HEK293 (cell line): ENCODE measurements at regions of chr2 and their contacts with region 1.

Region 1: GRCh38 chr2:191501561-191502168 is 176.3 kb upstream of the NABP1 start:
- H3K4me3 ChIP-seq: no peak overlapping the region
- H3K27ac ChIP-seq: no peak overlapping the region
- H3K4me1 ChIP-seq: no peaks in the 10 kb centered on the region
- CTCF ChIP-seq: peak; percentile 26; the same call in 1 of the 2 replicates

Region 2: DNA sequence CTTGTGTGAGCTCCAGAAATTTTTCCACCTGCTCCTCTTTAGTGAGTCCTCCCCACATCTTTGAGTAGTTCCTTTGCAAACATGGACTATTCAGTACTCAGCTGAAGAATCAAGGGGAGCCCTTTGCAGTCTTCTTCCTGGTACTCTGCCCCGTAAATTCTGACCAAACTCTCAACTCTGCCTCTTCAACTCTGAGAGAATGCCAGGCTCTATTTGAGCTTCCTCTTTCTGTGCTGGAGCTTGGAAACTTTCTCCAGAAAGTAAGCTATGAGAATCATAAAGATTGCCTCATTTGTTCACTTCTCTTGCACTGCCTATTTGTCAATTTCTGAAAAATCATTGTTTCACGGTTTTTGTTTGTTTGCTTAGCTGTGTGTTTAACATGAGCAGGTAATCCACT is 343.5 kb before region 1 on chr2:
- CTCF ChIA-PET with region 1: interaction called, 39 read pairs
- POLR2A ChIA-PET with region 1: no interaction called
- H3K4me3 ChIP-seq: no peak overlapping the region
- H3K27ac ChIP-seq: no peak overlapping the region
- H3K4me1 ChIP-seq: peaks cover 2% of the 10 kb centered on the region; the same call in 1 of the 2 replicates
- CTCF ChIP-seq: no peak

Region 3: GRCh38 chr2:191171708-191172355 is 329.8 kb before region 1 on chr2:
- CTCF ChIA-PET with region 1: interaction called, 39 read pairs
- POLR2A ChIA-PET with region 1: no interaction called
- H3K4me3 ChIP-seq: no peak overlapping the region
- H3K27ac ChIP-seq: no peak overlapping the region
- H3K4me1 ChIP-seq: no peaks in the 10 kb centered on the region
- CTCF ChIP-seq: no peak

Region 4: GRCh38 chr2:191329825-191330224 is 171.8 kb before region 1 on chr2:
- CTCF ChIA-PET with region 1: no interaction called
- POLR2A ChIA-PET with region 1: no interaction called
- H3K4me3 ChIP-seq: no peak overlapping the region
- H3K27ac ChIP-seq: no peak overlapping the region
- H3K4me1 ChIP-seq: no peaks in the 10 kb centered on the region
- CTCF ChIP-seq: no peak

Region 5: DNA sequence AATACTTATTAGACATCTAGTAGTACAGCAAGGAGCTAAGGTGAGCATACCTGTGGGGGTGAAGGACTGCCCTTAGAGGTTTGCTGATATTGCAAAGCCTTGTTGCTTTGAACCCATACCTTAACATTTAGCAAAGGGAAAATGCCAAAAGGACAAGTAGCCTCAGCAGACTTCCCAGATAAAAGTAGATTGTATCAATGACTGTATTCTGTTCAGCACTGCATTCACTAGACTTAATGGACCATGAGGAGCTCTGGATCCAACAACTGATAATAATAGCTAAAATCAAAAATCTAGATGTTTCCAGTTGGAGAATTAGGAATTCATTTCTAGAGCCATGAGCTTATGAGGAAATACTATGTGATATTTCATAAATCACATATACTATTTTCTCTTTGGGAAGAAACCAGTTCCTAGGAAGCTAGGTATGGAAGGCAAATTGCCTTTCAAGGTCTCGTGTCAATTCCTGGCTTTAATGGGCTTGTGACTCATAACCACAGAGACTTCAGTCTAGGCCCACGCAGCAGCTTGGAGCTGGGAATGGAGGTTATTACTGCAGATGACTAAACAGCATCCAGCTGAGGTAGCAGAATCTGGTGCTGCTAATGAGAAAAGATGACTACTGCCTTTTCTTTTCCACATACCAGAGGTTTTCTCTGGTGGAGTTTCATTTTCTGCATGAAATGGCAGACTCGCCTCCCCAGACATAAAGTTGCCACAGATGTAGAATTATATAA is 14.9 kb before region 1 on chr2:
- CTCF ChIA-PET with region 1: interaction called, 11 read pairs
- POLR2A ChIA-PET with region 1: no interaction called
- H3K4me3 ChIP-seq: no peak overlapping the region
- H3K27ac ChIP-seq: no peak overlapping the region
- H3K4me1 ChIP-seq: no peaks in the 10 kb centered on the region; the same call in 1 of the 2 replicates
- CTCF ChIP-seq: no peak

Region 6: DNA sequence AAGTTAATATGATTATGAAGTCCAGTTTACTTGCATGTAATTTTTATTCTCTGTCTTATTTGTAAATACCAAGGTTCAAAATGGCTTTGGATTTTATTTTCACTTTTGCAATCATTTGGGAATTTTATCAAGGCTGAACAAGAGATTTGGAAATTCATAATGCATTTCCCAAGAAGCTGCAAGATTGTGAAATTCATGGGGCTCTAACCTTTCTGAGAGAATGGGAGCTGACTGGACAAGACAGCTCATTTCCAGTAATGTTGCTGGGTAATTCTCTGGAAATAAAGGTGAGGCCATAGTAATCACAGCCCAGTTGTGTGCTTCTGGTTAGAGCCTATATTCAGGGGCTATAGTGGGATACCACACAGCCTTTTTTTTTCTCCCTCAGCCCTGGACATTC is 154.7 kb after region 1 on chr2:
- CTCF ChIA-PET with region 1: no interaction called
- POLR2A ChIA-PET with region 1: no interaction called
- H3K4me3 ChIP-seq: no peak overlapping the region
- H3K27ac ChIP-seq: no peak overlapping the region
- H3K4me1 ChIP-seq: no peaks in the 10 kb centered on the region
- CTCF ChIP-seq: no peak